PC-9 (cell line): ENCODE measurements at regions of chr2 and their contacts with region 1.

Region 1: DNA sequence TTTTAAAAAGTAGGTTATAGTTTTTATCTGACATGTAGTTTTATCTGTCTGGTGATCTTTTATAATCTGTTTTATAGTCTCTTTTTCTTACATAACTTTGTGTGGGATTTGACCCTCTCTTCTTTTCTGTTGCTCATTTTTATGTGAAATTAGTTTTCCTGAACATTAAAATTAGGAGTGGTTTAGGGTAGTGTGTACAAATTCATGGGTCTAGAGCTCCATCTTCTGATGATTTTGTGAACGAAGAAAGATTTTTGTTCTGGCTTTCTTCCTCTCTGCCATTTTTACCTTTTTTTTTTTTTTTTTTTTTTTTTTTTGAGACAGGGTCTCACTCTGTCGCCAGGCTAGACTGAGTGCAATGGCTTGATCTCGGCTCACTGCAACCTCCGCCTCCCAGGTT is 46.6 kb downstream of the SLC30A6 start:
- DNase-seq: no peak
- H3K4me3 ChIP-seq: no peak overlapping the region
- H3K27ac ChIP-seq: no peak overlapping the region
- H3K4me1 ChIP-seq: no peaks in the 10 kb centered on the region
- H3K27me3 ChIP-seq: no peaks in the 10 kb centered on the region
- CTCF ChIP-seq: peak; percentile 36; the same call in 1 of the 2 replicates

Region 2: GRCh38 chr2:31886697-31887096 is 325.6 kb before region 1 on chr2:
- CTCF ChIA-PET with region 1: interaction called, 13 read pairs
- POLR2A ChIA-PET with region 1: no interaction called
- intact Hi-C with region 1: no loop called
- DNase-seq: no peak
- H3K4me3 ChIP-seq: no peak overlapping the region
- H3K27ac ChIP-seq: no peak overlapping the region
- H3K4me1 ChIP-seq: no peaks in the 10 kb centered on the region
- H3K27me3 ChIP-seq: no peaks in the 10 kb centered on the region
- CTCF ChIP-seq: peak; percentile 41; the same call in 1 of the 2 replicates